PC-3 (cell line): ENCODE measurements at regions of chr12 and their contacts with region 1.

Region 1: GRCh38 chr12:117685110-117685926 is 283.5 kb downstream of the KSR2 start:
- DNase-seq: peak; percentile 96
- ATAC-seq: peak; percentile 67
- H3K4me3 ChIP-seq: peak overlapping the region; percentile 55
- H3K27ac ChIP-seq: peak overlapping the region; percentile 98
- H3K4me1 ChIP-seq: peaks cover 57% of the 10 kb centered on the region
- H3K27me3 ChIP-seq: no peaks in the 10 kb centered on the region
- CTCF ChIP-seq: no peak

Region 2: DNA sequence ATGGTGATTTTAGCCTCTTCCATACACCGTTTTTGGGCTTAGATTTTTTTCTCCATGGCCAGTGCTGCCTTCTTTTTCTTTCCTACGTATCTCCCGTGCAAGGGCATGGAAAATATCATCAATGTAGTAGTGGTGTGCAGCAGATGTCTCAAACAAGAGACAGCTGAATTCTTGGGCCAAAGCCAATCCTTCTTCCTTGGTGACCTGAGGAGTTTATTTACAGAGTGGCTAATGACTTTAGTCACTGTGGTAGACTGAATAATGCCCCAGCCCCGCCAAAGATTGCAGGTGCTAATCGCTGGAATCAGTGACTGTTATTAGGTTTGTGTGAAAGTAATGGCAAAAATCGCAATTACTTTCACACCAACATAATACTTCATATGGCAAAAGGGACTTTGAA is 88.3 kb before region 1 on chr12:
- CTCF ChIA-PET with region 1: no interaction called
- POLR2A ChIA-PET with region 1: no interaction called
- intact Hi-C with region 1: loop called (anchors 2 kb)
- DNase-seq: peak; percentile 91
- ATAC-seq: peak; percentile 81
- H3K4me3 ChIP-seq: no peak overlapping the region
- H3K27ac ChIP-seq: no peak overlapping the region
- H3K4me1 ChIP-seq: peaks cover 25% of the 10 kb centered on the region
- H3K27me3 ChIP-seq: no peaks in the 10 kb centered on the region
- CTCF ChIP-seq: no peak

Region 3: GRCh38 chr12:117699575-117699974 is 14.3 kb after region 1 on chr12:
- CTCF ChIA-PET with region 1: interaction called, 12 read pairs
- POLR2A ChIA-PET with region 1: interaction called, 10 read pairs
- intact Hi-C with region 1: loop called (anchors 1 kb)
- DNase-seq: peak; percentile 86
- ATAC-seq: peak; percentile 79
- H3K4me3 ChIP-seq: no peak overlapping the region; the same call in 1 of the 2 replicates
- H3K27ac ChIP-seq: peak overlapping the region; percentile 92
- H3K4me1 ChIP-seq: peaks cover 23% of the 10 kb centered on the region
- H3K27me3 ChIP-seq: no peaks in the 10 kb centered on the region
- CTCF ChIP-seq: no peak

Region 4: GRCh38 chr12:117774941-117775775 is 89.8 kb after region 1 on chr12:
- CTCF ChIA-PET with region 1: no interaction called
- POLR2A ChIA-PET with region 1: interaction called, 11 read pairs
- intact Hi-C with region 1: no loop called
- DNase-seq: no peak
- ATAC-seq: no peak
- H3K4me3 ChIP-seq: no peak overlapping the region
- H3K27ac ChIP-seq: no peak overlapping the region
- H3K4me1 ChIP-seq: no peaks in the 10 kb centered on the region
- H3K27me3 ChIP-seq: no peaks in the 10 kb centered on the region
- CTCF ChIP-seq: no peak

Region 5: DNA sequence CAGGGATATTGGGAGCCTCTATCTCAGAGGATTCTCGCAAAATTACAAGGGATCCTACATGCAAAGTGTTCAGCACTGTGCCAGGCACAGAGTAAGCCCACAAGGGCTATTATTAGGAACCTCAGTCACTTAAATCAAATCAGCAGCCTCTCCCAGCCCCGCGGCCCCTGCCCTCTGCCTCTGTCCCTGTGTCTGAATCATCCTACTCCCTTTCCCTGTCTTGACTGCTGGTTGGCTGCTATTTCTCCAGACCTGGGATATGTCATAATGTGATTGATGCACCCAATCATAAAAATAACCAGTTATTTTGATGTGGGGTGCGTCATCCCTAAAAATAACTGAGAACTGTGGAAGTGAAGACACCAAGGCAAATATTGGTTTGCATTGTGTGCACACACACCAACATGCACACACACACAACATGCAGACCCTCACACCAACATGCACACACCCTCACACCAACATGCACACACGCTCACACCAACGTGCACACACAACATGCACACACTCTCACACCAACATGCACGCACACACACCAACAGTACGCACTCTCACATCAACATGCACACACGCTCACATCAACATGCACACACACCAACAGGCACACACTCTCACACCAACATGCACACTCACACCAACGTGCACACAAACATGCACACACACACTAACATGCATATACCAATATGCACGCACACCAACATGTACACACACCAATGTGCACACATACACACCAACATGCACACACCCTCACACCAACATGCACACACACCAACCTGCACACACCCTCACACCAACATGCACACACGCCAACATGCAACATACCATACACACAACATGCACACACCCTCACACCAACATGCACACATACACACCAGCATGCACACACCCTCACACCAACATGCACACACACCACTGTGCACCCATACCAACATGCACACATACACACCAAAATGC is 107.4 kb after region 1 on chr12:
- CTCF ChIA-PET with region 1: no interaction called
- POLR2A ChIA-PET with region 1: interaction called, 3 read pairs
- intact Hi-C with region 1: loop called (anchors 5 kb)
- DNase-seq: peak; percentile 90
- ATAC-seq: peak; percentile 96
- H3K4me3 ChIP-seq: no peak overlapping the region
- H3K27ac ChIP-seq: peak overlapping the region; percentile 71
- H3K4me1 ChIP-seq: peaks cover 24% of the 10 kb centered on the region
- H3K27me3 ChIP-seq: no peaks in the 10 kb centered on the region
- CTCF ChIP-seq: no peak

Region 6: GRCh38 chr12:118055144-118055557 is 369.8 kb after region 1 on chr12:
- CTCF ChIA-PET with region 1: no interaction called
- POLR2A ChIA-PET with region 1: no interaction called
- intact Hi-C with region 1: loop called (anchors 10 kb)
- DNase-seq: peak; percentile 78
- ATAC-seq: no peak
- H3K4me3 ChIP-seq: no peak overlapping the region
- H3K27ac ChIP-seq: no peak overlapping the region
- H3K4me1 ChIP-seq: peaks cover 64% of the 10 kb centered on the region
- H3K27me3 ChIP-seq: no peaks in the 10 kb centered on the region
- CTCF ChIP-seq: peak; percentile 91